Panc1 (cell line): ENCODE measurements at regions of chr20 and their contacts with region 1.

Region 1: GRCh38 chr20:8983478-8984345 is 85.2 kb upstream of the PLCB4 start:
- DNase-seq: no peak
- ATAC-seq: no peak
- H3K4me3 ChIP-seq: no peak overlapping the region
- H3K27ac ChIP-seq: no peak overlapping the region
- H3K4me1 ChIP-seq: no peaks in the 10 kb centered on the region
- H3K27me3 ChIP-seq: no peaks in the 10 kb centered on the region
- CTCF ChIP-seq: no peak

Region 2: GRCh38 chr20:8964959-8965562 is 18.7 kb before region 1 on chr20:
- CTCF ChIA-PET with region 1: no interaction called
- POLR2A ChIA-PET with region 1: no interaction called
- in situ Hi-C with region 1: no loop called
- intact Hi-C with region 1: loop called (anchors 1 kb)
- DNase-seq: no peak
- ATAC-seq: no peak
- H3K4me3 ChIP-seq: no peak overlapping the region
- H3K27ac ChIP-seq: no peak overlapping the region
- H3K4me1 ChIP-seq: no peaks in the 10 kb centered on the region
- H3K27me3 ChIP-seq: no peaks in the 10 kb centered on the region
- CTCF ChIP-seq: no peak

Region 3: GRCh38 chr20:9059931-9060330 is 76.2 kb after region 1 on chr20:
- CTCF ChIA-PET with region 1: no interaction called
- POLR2A ChIA-PET with region 1: no interaction called
- in situ Hi-C with region 1: no loop called
- intact Hi-C with region 1: no loop called
- DNase-seq: no peak
- ATAC-seq: no peak
- H3K4me3 ChIP-seq: no peak overlapping the region
- H3K27ac ChIP-seq: no peak overlapping the region
- H3K4me1 ChIP-seq: no peaks in the 10 kb centered on the region
- H3K27me3 ChIP-seq: no peaks in the 10 kb centered on the region
- CTCF ChIP-seq: no peak

Region 4: DNA sequence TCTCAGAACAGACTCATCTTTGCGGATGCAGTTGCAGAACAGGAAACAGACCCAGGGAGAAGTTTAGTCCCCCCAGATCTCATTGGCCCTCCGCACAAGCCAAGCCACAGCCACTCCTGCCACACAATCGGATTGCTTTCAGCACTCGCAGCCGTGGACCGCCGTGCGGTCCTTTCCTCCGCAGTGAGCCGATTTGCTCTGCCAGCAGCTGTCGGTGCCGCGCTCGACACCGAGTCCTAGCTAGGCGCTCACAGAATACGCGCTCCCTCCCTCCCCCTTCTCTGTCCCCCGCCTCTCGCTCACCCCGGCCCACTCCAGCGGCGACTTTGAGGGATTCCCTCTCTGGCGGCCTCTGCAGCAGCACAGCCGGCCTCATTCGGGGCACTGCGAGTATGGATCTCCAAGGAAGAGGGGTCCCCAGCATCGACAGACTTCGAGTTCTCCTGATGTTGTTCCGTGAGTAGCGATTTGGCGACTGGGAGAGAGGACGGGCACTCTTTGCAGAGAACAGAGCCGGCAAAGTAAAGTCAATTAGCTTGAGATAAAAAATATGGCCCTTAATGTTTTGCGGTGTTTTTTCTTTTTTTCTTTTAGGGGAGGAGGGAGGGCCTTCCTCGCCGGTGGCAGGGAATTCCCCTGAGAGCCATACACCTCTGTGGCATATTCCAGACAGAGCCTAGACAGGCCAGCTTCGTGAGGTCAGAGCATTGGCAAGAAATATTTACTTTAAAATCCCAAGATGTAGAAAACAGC is 530.9 kb after region 1 on chr20 and contains the start of gene LAMP5:
- CTCF ChIA-PET with region 1: no interaction called
- POLR2A ChIA-PET with region 1: no interaction called
- in situ Hi-C with region 1: no loop called
- intact Hi-C with region 1: no loop called
- DNase-seq: no peak
- ATAC-seq: peak; percentile 69; the same call in 1 of the 2 replicates
- H3K4me3 ChIP-seq: peak within 1 kb of the TSS; percentile 12 to 29; a peak in 3 of 4 replicates
- H3K27ac ChIP-seq: no peak within 1 kb of the TSS
- H3K4me1 ChIP-seq: peaks cover 5% of the 10 kb centered on the region; the same call in 1 of the 2 replicates
- H3K27me3 ChIP-seq: peaks cover 32% of the 10 kb centered on the region
- CTCF ChIP-seq: no peak
- total RNA-seq, gene LAMP5: not detected